IMR-90 (cell line): ENCODE measurements at regions of chr2 and their contacts with region 1.

Region 1: DNA sequence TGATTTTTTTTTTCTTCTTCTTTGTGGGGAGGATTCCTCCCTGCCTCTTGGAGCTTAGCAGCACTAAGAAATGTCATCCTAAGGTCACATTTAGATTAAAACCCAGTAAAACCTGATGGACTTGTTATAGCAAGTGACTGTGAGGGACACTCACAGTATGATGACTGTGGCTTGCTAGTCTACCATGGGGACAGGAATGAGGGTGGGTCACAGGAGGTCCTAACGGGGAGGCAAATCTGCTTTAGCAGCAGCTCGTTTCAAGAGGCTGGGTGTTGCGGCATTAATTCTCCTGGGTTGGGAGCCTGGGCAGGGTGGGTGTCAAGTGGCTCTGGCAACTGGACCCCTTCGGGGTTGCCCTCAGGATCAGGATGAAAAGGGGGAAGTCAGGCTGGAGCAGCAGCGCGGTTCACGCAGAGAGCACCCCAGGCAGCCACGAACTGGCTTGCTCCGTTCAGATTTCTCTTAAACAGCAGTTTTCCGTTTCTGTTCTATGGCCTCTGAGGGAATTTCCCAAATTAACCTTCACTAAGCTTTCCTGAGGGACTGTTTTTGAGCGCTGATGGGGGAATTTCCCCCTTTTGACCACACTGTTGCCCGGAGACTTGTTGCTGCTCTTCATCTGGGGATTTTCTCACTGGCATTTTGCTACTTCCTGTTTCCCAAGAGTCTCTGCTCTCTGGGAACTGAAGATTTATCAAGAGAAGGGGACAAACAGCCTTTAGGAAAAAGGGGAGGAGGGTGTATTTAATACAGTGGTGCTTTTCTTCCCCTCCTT is 59.8 kb upstream of the PELI1 start:
- DNase-seq: peak; percentile 62
- ATAC-seq: peak; percentile 15
- H3K4me3 ChIP-seq: no peak overlapping the region
- H3K27ac ChIP-seq: peak overlapping the region; percentile 45; the same call in 1 of the 2 replicates
- H3K4me1 ChIP-seq: peaks cover 14% of the 10 kb centered on the region
- H3K27me3 ChIP-seq: peaks cover 2% of the 10 kb centered on the region
- CTCF ChIP-seq: no peak
- POLR2A ChIP-seq: no peak
- RAD21 ChIP-seq: no peak

Region 2: GRCh38 chr2:64260817-64261216 is 56.8 kb after region 1 on chr2:
- CTCF ChIA-PET with region 1: no interaction called
- POLR2A ChIA-PET with region 1: no interaction called
- dilution Hi-C with region 1: no loop called
- in situ Hi-C with region 1: no loop called
- intact Hi-C with region 1: loop called (anchors 5 kb)
- DNase-seq: no peak
- ATAC-seq: no peak
- H3K4me3 ChIP-seq: no peak overlapping the region
- H3K27ac ChIP-seq: no peak overlapping the region
- H3K4me1 ChIP-seq: no peaks in the 10 kb centered on the region
- H3K27me3 ChIP-seq: peaks cover 5% of the 10 kb centered on the region
- CTCF ChIP-seq: no peak
- POLR2A ChIP-seq: no peak
- RAD21 ChIP-seq: no peak